ENCODE measurements at regions of chr1 and their contacts with region 1.

Region 1: DNA sequence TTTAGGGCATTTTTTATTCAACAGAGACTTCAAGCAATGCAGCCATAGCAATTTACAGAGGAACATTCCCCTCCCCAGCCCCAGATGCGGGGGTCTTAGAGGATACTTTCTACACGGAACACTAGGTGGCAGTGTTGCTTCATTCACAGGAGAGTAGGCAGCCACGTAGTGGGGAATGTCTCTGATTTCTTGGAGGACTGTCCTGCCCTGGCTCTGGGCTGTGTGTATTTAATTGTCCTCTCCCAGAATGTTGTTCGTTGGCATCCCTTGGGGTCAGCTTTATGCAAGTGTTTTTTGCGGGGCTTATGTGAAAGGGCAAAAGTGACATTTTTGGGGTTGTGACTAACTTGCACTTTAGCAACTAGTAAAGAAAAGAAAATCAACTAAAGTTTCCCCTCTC is 96.9 kb downstream of the PAPPA2 start:
- DNase-seq: peak; percentile 34 to 88
- H3K4me3 ChIP-seq: no peak overlapping the region
- H3K27ac ChIP-seq: peak overlapping the region; percentile 17
- H3K4me1 ChIP-seq: peaks cover 17% of the 10 kb centered on the region
- H3K27me3 ChIP-seq: no peaks in the 10 kb centered on the region
- CTCF ChIP-seq: peak; percentile 46 to 88 (median 76)
- POLR2A ChIP-seq: no peak

Region 2: GRCh38 chr1:176517484-176517883 is 42.4 kb before region 1 on chr1:
- intact Hi-C with region 1: no loop called
- DNase-seq: no peak
- H3K4me3 ChIP-seq: no peak overlapping the region
- H3K27ac ChIP-seq: no peak overlapping the region
- H3K4me1 ChIP-seq: no peaks in the 10 kb centered on the region
- H3K27me3 ChIP-seq: no peaks in the 10 kb centered on the region
- CTCF ChIP-seq: no peak
- POLR2A ChIP-seq: no peak

Region 3: DNA sequence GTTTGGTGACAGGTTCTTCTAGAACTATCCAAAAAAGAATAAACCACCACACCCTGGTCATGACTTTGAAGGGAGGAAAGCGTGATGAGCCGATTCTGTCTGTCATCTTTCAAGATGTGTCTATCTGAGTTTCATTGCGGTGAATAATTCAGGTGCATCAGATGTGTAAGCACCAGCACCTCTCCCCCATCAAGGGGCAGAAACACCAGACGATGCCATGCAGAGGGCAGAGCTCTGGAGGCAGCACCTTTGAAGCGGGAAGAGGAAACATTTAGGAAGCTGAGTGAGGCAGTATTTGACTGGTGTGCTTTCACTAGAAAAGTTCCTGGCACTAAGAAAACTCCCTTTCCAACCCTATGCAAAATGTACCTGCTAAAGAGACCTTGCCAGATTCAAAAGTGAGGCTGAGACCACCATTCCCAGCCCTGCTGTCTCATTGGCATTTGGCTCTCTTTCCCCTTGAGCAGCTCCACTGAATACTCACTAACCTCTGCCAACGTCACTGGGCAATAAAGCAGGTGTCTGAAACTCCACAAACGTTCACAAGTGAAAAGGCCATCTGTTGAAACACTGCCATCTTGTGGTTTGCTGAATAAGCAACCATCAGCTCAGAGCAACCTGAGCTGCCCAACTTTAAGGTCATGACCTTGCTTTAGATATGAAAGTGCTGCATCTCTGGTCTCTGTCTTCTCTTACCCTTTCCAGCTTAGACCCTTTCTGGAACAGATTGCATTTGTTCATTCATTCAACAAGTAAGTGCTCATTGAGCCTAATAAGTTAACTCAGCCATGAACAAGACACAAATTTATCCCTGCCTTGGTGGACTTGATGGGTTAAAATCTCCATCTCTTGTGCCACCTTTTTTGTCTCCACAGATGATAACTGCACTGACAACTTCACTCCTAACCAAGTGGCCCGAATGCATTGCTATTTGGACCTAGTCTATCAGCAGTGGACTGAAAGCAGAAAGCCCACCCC is 131.7 kb after region 1 on chr1:
- intact Hi-C with region 1: loop called (anchors 10 kb)
- DNase-seq: no peak
- H3K4me3 ChIP-seq: no peak overlapping the region
- H3K27ac ChIP-seq: no peak overlapping the region
- H3K4me1 ChIP-seq: no peaks in the 10 kb centered on the region
- H3K27me3 ChIP-seq: no peaks in the 10 kb centered on the region
- CTCF ChIP-seq: no peak
- POLR2A ChIP-seq: no peak

Measured in vagina (tissue), 2 donors.